ENCODE measurements at regions of chr1 and their contacts with region 1.

Region 1: GRCh38 chr1:87045761-87046304 is 131.4 kb downstream of the HS2ST1 start:
- DNase-seq: peak; percentile 82
- H3K4me3 Mint-ChIP-seq: peak overlapping the region; percentile 33
- H3K27ac Mint-ChIP-seq: peak overlapping the region; percentile 79
- H3K4me1 Mint-ChIP-seq: peaks cover 45% of the 10 kb centered on the region
- H3K27me3 Mint-ChIP-seq: no peaks in the 10 kb centered on the region

Region 2: DNA sequence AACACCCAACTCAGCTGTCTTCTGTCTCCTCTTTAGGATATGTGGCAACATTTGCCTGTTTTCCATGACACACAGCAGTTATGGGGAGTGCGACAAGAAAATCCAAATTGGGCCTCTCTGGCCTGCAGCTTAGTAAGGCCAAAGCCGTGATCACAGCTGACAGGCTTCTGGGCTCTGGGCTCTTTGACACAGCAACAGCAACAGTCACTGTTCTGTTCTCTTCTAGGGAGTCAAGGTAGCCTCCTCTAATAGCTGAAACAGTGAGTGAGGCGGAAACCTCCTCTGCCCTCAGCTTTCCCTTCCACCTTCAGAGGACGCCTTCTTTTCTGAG is 558.1 kb before region 1 on chr1:
- CTCF ChIA-PET with region 1: no interaction called
- intact Hi-C with region 1: no loop called
- DNase-seq: no peak
- H3K4me3 Mint-ChIP-seq: no peak overlapping the region
- H3K27ac Mint-ChIP-seq: no peak overlapping the region
- H3K4me1 Mint-ChIP-seq: no peaks in the 10 kb centered on the region
- H3K27me3 Mint-ChIP-seq: no peaks in the 10 kb centered on the region

Region 3: DNA sequence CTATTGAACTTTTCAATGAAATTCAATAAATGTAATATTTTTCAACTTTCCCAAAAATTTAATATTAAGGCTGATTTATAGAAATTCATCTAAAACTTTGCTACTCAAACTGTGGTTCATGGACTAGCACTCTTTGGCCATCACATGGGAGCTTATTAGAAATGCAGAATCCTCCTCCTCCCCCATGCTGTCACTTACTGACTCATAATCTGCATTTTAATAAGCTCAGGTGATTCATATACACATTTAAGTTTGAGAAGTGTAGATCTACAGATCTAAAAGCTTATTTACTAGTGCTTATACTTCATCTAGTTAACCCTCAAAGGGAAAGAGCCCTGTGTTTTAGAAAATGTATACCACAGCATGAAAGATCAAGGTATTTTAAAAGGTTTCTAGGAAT is 47.1 kb before region 1 on chr1:
- CTCF ChIA-PET with region 1: no interaction called
- intact Hi-C with region 1: loop called (anchors 2 kb)
- DNase-seq: no peak
- H3K4me3 Mint-ChIP-seq: no peak overlapping the region
- H3K27ac Mint-ChIP-seq: no peak overlapping the region
- H3K4me1 Mint-ChIP-seq: peaks cover 9% of the 10 kb centered on the region
- H3K27me3 Mint-ChIP-seq: no peaks in the 10 kb centered on the region

Region 4: DNA sequence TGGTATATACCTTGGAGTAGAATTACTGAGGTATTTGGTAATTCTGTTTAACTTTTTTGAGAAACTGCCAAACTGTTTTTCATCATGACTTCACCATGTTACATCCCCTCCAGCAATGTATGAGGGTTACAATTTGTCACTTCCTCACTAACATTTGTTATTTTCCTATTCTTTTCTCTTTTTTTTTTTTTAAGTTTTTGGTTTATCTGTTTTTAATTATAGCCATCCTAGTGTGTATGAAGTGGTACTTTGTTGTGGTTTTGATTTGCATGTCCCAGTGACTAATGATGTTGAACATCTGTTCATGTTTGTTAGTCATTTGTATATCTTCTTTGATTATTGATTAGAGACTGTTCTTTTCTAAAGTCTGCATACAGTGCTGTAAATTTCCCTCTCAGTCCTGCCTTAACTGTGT is 15.9 kb after region 1 on chr1:
- CTCF ChIA-PET with region 1: interaction called, 4 read pairs
- intact Hi-C with region 1: loop called (anchors 1 kb)
- DNase-seq: no peak
- H3K4me3 Mint-ChIP-seq: no peak overlapping the region
- H3K27ac Mint-ChIP-seq: no peak overlapping the region
- H3K4me1 Mint-ChIP-seq: peaks cover 28% of the 10 kb centered on the region
- H3K27me3 Mint-ChIP-seq: no peaks in the 10 kb centered on the region

Region 5: GRCh38 chr1:87077959-87078639 is 32.3 kb after region 1 on chr1:
- CTCF ChIA-PET with region 1: interaction called, 12 read pairs
- intact Hi-C with region 1: loop called (anchors 1 kb)
- DNase-seq: peak; percentile 20
- H3K4me3 Mint-ChIP-seq: no peak overlapping the region
- H3K27ac Mint-ChIP-seq: peak overlapping the region; percentile 31
- H3K4me1 Mint-ChIP-seq: peaks cover 15% of the 10 kb centered on the region
- H3K27me3 Mint-ChIP-seq: no peaks in the 10 kb centered on the region

Region 6: GRCh38 chr1:87084244-87084836 is 38.5 kb after region 1 on chr1:
- CTCF ChIA-PET with region 1: interaction called, 12 read pairs
- intact Hi-C with region 1: no loop called
- DNase-seq: no peak
- H3K4me3 Mint-ChIP-seq: no peak overlapping the region
- H3K27ac Mint-ChIP-seq: no peak overlapping the region
- H3K4me1 Mint-ChIP-seq: peaks cover 8% of the 10 kb centered on the region
- H3K27me3 Mint-ChIP-seq: no peaks in the 10 kb centered on the region

Measured in activated naive CD4-positive, alpha-beta T cell treated with anti-CD3 and anti-CD28 coated beads for 36 hours (primary cell).